HEK293 (cell line): ENCODE measurements at regions of chr1 and their contacts with region 1.

Region 1: GRCh38 chr1:109099938-109100773 is 9.6 kb downstream of the TMEM167B start:
- H3K4me3 ChIP-seq: peak overlapping the region; percentile 82
- H3K27ac ChIP-seq: peak overlapping the region; percentile 86
- H3K4me1 ChIP-seq: no peaks in the 10 kb centered on the region
- CTCF ChIP-seq: peak; percentile 91

Region 2: GRCh38 chr1:108963052-108963686 is 137.0 kb before region 1 on chr1 and contains the start of gene CLCC1:
- CTCF ChIA-PET with region 1: no interaction called
- POLR2A ChIA-PET with region 1: interaction called, 13 read pairs
- H3K4me3 ChIP-seq: peak within 1 kb of the TSS; percentile 59
- H3K27ac ChIP-seq: peak within 1 kb of the TSS; percentile 74
- H3K4me1 ChIP-seq: no peaks in the 10 kb centered on the region
- CTCF ChIP-seq: no peak

Region 3: GRCh38 chr1:109075531-109076490 is 24.3 kb before region 1 on chr1 and contains the start of gene TAF13:
- CTCF ChIA-PET with region 1: interaction called, 6 read pairs
- POLR2A ChIA-PET with region 1: interaction called, 32 read pairs
- H3K4me3 ChIP-seq: peak within 1 kb of the TSS; percentile 97
- H3K27ac ChIP-seq: peak within 1 kb of the TSS; percentile 80
- H3K4me1 ChIP-seq: no peaks in the 10 kb centered on the region
- CTCF ChIP-seq: peak; percentile 74

Region 4: DNA sequence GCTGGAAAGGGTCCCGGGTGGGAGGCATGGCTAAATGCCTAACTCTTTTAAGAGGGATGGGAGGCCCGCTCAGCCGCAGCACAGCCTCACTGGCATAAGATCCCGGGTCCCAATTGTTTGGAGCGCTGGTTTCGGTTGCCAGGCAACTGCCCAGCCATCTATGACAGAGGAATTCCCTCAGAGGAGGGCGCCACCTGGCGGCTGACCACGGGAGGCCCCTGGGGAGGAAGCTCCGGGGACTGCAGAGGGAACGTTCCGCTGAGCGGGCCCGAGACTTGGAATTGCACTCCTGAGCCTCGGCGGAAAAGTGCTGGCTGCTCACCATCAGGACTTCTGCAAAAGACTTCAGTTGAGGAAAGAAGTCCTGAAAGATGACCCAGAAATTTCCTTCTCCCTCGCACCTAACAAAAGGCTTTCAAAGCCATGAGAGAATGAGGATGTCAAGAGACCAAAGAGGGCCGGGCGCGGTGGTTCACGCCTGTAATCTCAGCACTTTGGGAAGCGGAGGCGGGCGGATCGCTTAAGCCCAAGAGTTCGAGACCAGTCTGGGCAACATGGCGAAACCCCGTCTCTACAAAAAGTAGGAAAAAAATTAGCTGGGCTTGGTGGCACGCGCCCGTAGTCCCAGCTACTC is 12.6 kb after region 1 on chr1:
- CTCF ChIA-PET with region 1: interaction called, 44 read pairs
- POLR2A ChIA-PET with region 1: interaction called, 50 read pairs
- H3K4me3 ChIP-seq: no peak overlapping the region
- H3K27ac ChIP-seq: no peak overlapping the region
- H3K4me1 ChIP-seq: no peaks in the 10 kb centered on the region
- CTCF ChIP-seq: peak; percentile 79

Region 5: GRCh38 chr1:109201123-109201703 is 101.1 kb after region 1 on chr1:
- CTCF ChIA-PET with region 1: interaction called, 4 read pairs
- POLR2A ChIA-PET with region 1: interaction called, 10 read pairs
- H3K4me3 ChIP-seq: no peak overlapping the region
- H3K27ac ChIP-seq: no peak overlapping the region
- H3K4me1 ChIP-seq: no peaks in the 10 kb centered on the region
- CTCF ChIP-seq: no peak; the same call in 1 of the 2 replicates

Region 6: GRCh38 chr1:109248797-109249642 is 148.9 kb after region 1 on chr1 and contains the start of gene CELSR2:
- CTCF ChIA-PET with region 1: no interaction called
- POLR2A ChIA-PET with region 1: interaction called, 10 read pairs
- H3K4me3 ChIP-seq: peak within 1 kb of the TSS; percentile 45
- H3K27ac ChIP-seq: peak within 1 kb of the TSS; percentile 65; the same call in 1 of the 2 replicates
- H3K4me1 ChIP-seq: peaks cover 5% of the 10 kb centered on the region; the same call in 1 of the 2 replicates
- CTCF ChIP-seq: no peak; the same call in 1 of the 2 replicates